RWPE1 (cell line): ENCODE measurements at regions of chr2 and their contacts with region 1.

Region 1: GRCh38 chr2:110205660-110206455 is 1.0 kb upstream of the NPHP1 start:
- DNase-seq: no peak
- H3K27ac ChIP-seq: no peak overlapping the region
- CTCF ChIP-seq: no peak

Region 2: DNA sequence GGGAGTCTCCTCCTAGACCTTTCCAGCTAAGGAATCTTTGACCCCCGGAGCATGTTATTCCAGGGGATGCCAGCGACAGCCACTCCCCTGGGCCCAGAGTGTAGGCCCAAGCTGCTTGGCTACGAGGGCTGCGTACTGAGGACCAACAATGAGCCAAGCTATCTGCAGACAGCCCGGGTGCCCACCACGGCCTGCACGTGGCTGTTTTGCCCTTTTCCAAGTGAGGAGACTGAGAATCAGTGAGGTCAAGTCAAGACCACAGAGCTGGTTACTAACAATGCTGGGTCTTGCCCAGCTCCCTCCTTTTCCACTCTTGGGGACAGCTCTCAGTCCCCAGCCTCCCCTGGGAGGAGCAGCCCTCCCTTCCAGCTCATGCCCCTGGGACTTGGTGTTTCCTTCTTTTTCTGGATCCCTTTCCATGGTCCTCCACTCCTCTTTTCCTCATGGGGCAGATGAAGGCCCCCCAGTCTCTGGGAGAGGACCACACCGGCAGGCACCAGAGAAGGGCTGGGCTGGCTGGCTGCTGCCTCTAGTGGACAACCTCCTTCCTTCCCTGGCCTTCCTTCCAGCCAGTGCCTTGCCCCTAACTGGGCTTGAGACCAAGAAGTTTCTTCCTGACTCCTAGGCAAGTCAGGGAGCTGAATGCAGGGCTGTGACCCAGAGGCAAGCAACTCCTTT is 89.7 kb before region 1 on chr2:
- CTCF ChIA-PET with region 1: no interaction called
- POLR2A ChIA-PET with region 1: interaction called, 11 read pairs
- DNase-seq: no peak
- H3K27ac ChIP-seq: peak overlapping the region; percentile 71
- CTCF ChIP-seq: peak; percentile 20; the same call in 1 of the 2 replicates